Left cardiac atrium (tissue), 4 donors: ENCODE measurements at regions of chr3 and their contacts with region 1.

Region 1: DNA sequence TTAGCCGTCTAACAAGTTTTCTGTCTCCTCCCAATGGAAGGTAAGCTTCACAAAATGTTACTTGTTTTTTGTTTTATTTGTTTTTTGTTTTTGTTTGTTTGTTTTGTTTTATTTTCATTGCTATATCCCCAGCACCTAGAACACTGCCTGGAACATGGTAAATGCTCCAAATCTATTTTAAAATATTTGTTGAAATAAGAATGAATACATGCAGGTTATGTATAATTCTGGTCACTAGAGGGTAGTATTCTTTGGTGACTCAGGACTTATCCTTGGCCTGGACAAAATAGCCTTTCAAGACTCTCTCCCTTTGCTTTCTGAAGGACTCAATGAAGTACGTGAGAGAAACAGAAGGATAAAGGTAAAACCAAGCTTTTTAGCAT is 47.0 kb upstream of the PPP2R3A start:
- DNase-seq: no peak
- ATAC-seq: peak; percentile 62 to 65

Region 2: GRCh38 chr3:135159681-135160247 is 758.8 kb before region 1 on chr3:
- intact Hi-C with region 1: no loop called
- DNase-seq: no peak
- ATAC-seq: no peak

Region 3: GRCh38 chr3:136036306-136036705 is 117.7 kb after region 1 on chr3:
- intact Hi-C with region 1: loop called (anchors 2 to 5 kb)
- DNase-seq: no peak
- ATAC-seq: no peak

Region 4: GRCh38 chr3:136042608-136043221 is 124.1 kb after region 1 on chr3:
- intact Hi-C with region 1: loop called (anchors 2 to 5 kb)
- DNase-seq: no peak
- ATAC-seq: peak; percentile 23 to 50